PC-3 (cell line): ENCODE measurements at regions of chrX and their contacts with region 1.

Region 1: DNA sequence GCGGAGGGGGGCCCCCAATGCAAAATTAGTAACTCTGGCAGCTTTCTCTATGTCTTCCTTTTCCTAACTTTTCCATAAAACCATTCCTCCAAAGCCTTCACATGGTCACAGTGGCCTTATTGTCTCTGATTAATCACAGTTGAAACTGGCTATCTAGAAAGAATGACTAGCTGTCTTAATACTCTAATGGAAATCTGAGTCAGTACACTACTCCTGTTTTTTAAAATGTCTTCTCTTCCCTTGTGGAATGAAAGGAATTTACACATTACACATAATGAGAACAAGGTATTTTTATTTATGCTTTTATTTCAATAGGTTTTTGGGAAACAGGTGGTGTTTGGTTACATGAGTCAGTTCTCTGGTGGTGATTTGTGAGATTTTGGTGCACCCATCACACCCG is 66.3 kb upstream of the PUDP start:
- DNase-seq: peak; percentile 58
- ATAC-seq: peak; percentile 71
- H3K4me3 ChIP-seq: no peak overlapping the region
- H3K27ac ChIP-seq: no peak overlapping the region; the same call in 1 of the 2 replicates
- H3K4me1 ChIP-seq: peaks cover 4% of the 10 kb centered on the region; the same call in 1 of the 2 replicates
- H3K27me3 ChIP-seq: no peaks in the 10 kb centered on the region
- CTCF ChIP-seq: no peak

Region 2: GRCh38 chrX:7889680-7890079 is 675.4 kb after region 1 on chrX:
- CTCF ChIA-PET with region 1: no interaction called
- POLR2A ChIA-PET with region 1: no interaction called
- intact Hi-C with region 1: loop called (anchors 5 kb)
- DNase-seq: peak; percentile 62
- ATAC-seq: peak; percentile 97
- H3K4me3 ChIP-seq: no peak overlapping the region
- H3K27ac ChIP-seq: no peak overlapping the region
- H3K4me1 ChIP-seq: peaks cover 14% of the 10 kb centered on the region
- H3K27me3 ChIP-seq: no peaks in the 10 kb centered on the region
- CTCF ChIP-seq: no peak